ENCODE measurements at regions of chr2 and their contacts with region 1.

Region 1: GRCh38 chr2:167331636-167332232 is 443.5 kb downstream of the XIRP2 start:
- DNase-seq: peak; percentile 83
- ATAC-seq: peak; percentile 91
- H3K4me3 Mint-ChIP-seq: peak overlapping the region; percentile 28
- H3K27ac Mint-ChIP-seq: peak overlapping the region; percentile 91
- H3K4me1 Mint-ChIP-seq: peaks cover 90% of the 10 kb centered on the region
- H3K27me3 Mint-ChIP-seq: no peaks in the 10 kb centered on the region
- CTCF ChIP-seq: peak; percentile 58

Region 2: DNA sequence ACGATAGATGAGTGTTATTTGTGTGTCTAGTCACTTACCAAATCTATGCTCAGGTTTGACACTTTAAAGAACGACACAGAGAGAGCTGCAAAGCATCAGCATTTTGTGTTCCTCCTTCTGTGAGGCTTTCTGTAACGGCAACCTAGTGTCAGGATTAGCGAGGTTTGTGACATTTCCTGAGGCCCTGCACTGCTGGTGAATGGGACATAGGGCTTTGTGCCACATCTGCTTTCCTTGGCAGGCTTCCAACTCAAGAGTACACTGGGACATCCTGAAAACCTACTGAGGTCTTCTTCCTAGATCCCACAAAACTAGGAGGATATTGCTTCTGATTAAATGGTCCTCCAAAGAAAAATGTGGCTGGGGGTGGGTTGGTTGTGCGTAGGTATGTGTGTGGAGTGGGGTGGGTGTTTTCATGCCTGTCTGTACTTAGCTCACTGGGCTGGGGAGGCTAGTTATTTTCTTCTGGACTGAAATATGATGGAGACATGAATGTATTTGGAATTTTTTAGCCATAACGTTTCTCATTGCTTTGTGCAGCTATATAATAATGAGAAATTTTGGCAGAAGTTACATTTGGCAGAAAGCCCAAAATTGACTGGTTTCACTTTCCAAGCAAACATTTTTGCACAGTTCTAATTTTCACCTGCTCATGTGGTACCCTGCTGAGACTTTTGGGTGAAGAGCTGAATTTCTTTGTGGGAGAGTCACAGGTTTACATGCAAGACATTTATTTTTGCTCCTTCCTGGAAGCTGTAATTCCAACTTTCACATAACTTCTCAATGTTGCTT is 135.1 kb before region 1 on chr2:
- CTCF ChIA-PET with region 1: no interaction called
- POLR2A ChIA-PET with region 1: no interaction called
- DNase-seq: no peak
- ATAC-seq: no peak
- H3K4me3 Mint-ChIP-seq: no peak overlapping the region
- H3K27ac Mint-ChIP-seq: no peak overlapping the region
- H3K4me1 Mint-ChIP-seq: 0 out of 2 replicates have a peak, but pooled peaks cover under 1% of the 10 kb centered on the region
- H3K27me3 Mint-ChIP-seq: no peaks in the 10 kb centered on the region
- CTCF ChIP-seq: no peak

Region 3: DNA sequence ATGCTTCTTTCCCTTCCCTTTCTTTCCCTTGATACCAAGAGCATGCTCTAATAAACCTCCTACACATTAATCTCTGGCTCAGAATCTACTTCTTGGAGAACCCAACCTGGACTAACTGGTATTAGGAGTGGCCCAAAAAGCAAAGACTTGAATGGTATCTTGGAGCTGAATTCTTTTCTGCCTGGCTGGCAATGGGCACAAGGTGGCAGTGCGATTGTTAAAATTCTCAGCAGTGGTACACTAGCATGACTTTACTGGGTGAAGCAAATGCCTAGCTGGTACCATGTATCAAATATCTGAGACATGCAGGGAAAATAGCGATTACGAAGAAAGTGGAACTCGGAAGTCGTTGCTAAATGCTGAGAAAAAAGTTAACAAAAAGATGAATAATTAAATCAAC is 67.4 kb before region 1 on chr2:
- CTCF ChIA-PET with region 1: interaction called, 14 read pairs
- POLR2A ChIA-PET with region 1: no interaction called
- DNase-seq: peak; percentile 43
- ATAC-seq: peak; percentile 95
- H3K4me3 Mint-ChIP-seq: no peak overlapping the region
- H3K27ac Mint-ChIP-seq: no peak overlapping the region
- H3K4me1 Mint-ChIP-seq: peaks cover 20% of the 10 kb centered on the region
- H3K27me3 Mint-ChIP-seq: no peaks in the 10 kb centered on the region
- CTCF ChIP-seq: no peak

Region 4: DNA sequence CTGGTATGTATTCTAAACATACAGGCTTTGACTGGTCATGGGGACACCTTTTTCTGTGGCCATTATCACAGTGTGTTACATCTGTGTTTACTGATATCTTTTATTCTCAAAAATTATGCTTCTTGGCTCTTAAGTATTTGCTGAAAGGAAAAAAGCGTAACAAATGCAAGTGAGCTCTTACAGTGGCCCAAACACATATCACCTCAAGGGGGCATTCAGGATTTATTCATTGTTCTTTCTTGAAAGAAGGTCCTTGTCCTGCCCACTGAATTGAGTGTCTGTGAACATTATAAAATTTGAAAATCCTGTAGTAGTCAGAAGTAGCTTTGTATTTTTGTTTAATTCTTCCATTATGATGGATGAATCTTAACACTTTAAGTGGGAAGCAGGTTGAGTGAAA is 11.0 kb after region 1 on chr2:
- CTCF ChIA-PET with region 1: interaction called, 12 read pairs
- POLR2A ChIA-PET with region 1: no interaction called
- DNase-seq: no peak
- ATAC-seq: peak; percentile 78
- H3K4me3 Mint-ChIP-seq: no peak overlapping the region
- H3K27ac Mint-ChIP-seq: peak overlapping the region; percentile 76
- H3K4me1 Mint-ChIP-seq: peaks cover 76% of the 10 kb centered on the region
- H3K27me3 Mint-ChIP-seq: no peaks in the 10 kb centered on the region
- CTCF ChIP-seq: no peak

Measured in WTC11 (cell line).